ENCODE measurements at regions of chr17 and their contacts with region 1.

Region 1: DNA sequence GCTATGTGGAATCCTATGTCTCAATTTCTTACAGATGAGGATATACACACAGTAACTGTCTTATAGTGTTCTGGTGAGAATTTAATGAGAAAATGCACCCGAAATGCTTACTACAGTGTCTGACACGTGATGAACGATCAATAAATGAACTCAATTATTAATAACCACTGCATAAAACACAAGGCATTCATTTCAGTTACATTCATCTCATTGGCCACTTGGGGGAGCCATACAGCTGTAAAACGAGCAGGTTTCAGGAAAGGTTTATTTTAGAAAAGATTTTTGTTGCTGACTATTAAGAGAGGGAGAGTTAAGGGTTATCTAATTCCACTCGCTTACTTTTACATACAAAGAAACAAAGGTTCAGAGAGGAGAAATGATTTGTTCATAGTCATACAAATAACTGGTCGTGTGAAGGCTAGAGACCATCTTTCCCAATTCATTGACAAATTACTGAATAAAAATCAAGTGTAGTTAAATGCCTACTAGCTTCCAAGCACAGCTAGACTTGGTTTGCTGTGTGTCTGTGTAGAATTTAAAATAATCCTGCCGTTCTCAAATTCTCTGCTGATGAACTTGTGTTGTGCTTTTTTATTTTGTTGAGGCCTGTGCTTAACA is 160.1 kb downstream of the MAP2K4 start:
- DNase-seq: peak; percentile 27 to 74
- ATAC-seq: peak; percentile 67 to 89
- H3K4me3 ChIP-seq: no peak overlapping the region
- H3K27ac ChIP-seq: peak overlapping the region; percentile 15 to 16; a peak in 3 of 6 replicates
- H3K4me1 ChIP-seq: peaks cover 4% of the 10 kb centered on the region; the same call in 2 of the 3 replicates
- CTCF ChIP-seq: peak; percentile 99
- EP300 ChIP-seq: no peak
- POLR2A ChIP-seq: no peak
- RAD21 ChIP-seq: peak; percentile 95 to 98

Region 2: DNA sequence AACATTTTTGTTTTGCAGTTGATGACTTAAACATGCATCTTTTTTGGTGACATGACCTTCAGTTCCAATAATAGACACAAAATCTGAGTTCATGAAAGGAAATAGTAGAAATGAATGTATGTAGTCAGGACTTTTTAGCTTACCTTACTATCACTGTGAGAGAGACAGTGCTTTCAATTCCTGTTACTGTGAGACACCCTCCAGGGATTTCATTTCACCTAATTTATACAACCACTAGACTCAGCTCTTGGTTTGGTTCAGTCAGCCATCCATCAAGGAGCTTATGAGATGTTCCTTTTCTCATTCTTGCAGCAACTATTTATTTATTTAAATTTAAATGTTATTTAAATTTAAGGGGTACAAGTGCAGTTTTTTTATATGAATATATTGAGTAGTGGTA is 82.2 kb before region 1 on chr17:
- CTCF ChIA-PET with region 1: no interaction called
- POLR2A ChIA-PET with region 1: no interaction called
- DNase-seq: no peak
- ATAC-seq: no peak
- H3K4me3 ChIP-seq: no peak overlapping the region
- H3K27ac ChIP-seq: no peak overlapping the region
- H3K4me1 ChIP-seq: peaks cover 3% of the 10 kb centered on the region; the same call in 1 of the 3 replicates
- CTCF ChIP-seq: no peak
- EP300 ChIP-seq: no peak
- POLR2A ChIP-seq: no peak
- RAD21 ChIP-seq: no peak

Region 3: DNA sequence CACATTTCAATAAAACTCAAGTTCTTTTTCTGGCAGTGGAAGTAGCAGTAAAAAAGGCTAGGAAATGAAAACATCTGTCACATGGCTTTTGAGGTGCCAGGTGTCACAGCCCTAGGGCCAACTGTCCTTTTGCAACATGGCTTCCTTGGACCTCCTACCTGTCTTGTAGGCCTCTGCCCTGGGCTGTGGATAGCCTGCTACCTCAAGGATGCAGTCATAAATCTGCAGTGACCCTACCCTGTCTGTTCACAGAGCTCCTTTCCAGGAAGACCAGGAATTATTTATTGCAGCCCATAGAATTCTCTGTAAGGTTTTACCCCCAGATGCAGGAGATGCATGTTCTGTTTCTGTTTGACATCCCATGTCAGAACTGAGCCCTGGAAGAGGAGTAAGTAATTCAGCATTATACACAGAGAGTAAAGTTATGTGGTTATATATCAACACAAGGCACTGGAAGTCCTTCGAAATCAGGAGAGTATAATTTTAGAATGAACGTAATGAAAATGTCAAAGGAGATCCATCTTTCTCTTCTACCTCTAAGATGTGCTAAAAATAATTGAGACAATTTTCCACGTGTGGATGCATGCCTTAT is 12.5 kb after region 1 on chr17:
- CTCF ChIA-PET with region 1: interaction called, 10 read pairs
- POLR2A ChIA-PET with region 1: no interaction called
- DNase-seq: no peak
- ATAC-seq: no peak
- H3K4me3 ChIP-seq: no peak overlapping the region
- H3K27ac ChIP-seq: no peak overlapping the region
- H3K4me1 ChIP-seq: no peaks in the 10 kb centered on the region
- CTCF ChIP-seq: no peak
- EP300 ChIP-seq: no peak
- POLR2A ChIP-seq: no peak
- RAD21 ChIP-seq: no peak

Region 4: DNA sequence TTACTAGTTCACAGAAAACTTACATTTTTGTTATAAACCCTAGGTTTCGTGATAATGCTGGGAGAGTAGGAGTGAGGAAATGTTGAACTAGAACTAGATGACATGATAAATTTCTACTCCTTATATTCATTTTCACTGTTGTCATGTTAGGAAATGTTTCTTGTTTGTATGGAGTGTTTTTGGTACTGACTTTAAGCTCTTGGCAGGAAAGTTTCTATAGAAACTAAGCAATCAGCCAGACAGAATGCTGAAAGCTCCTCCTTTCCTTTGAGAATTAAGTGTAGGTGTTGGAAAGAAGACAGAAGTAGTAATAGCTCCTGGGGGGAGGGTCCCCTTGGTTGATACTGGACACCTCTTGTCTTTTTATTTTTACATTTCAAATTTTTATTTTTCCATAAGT is 149.7 kb after region 1 on chr17:
- CTCF ChIA-PET with region 1: no interaction called
- POLR2A ChIA-PET with region 1: no interaction called
- DNase-seq: no peak
- ATAC-seq: no peak
- H3K4me3 ChIP-seq: no peak overlapping the region
- H3K27ac ChIP-seq: no peak overlapping the region
- H3K4me1 ChIP-seq: no peaks in the 10 kb centered on the region
- CTCF ChIP-seq: no peak
- EP300 ChIP-seq: no peak
- POLR2A ChIP-seq: no peak
- RAD21 ChIP-seq: no peak

Measured in A549 (cell line).